Dorsolateral prefrontal cortex (tissue), 120 donors: ENCODE measurements at regions of chr3 and their contacts with region 1.

Region 1: DNA sequence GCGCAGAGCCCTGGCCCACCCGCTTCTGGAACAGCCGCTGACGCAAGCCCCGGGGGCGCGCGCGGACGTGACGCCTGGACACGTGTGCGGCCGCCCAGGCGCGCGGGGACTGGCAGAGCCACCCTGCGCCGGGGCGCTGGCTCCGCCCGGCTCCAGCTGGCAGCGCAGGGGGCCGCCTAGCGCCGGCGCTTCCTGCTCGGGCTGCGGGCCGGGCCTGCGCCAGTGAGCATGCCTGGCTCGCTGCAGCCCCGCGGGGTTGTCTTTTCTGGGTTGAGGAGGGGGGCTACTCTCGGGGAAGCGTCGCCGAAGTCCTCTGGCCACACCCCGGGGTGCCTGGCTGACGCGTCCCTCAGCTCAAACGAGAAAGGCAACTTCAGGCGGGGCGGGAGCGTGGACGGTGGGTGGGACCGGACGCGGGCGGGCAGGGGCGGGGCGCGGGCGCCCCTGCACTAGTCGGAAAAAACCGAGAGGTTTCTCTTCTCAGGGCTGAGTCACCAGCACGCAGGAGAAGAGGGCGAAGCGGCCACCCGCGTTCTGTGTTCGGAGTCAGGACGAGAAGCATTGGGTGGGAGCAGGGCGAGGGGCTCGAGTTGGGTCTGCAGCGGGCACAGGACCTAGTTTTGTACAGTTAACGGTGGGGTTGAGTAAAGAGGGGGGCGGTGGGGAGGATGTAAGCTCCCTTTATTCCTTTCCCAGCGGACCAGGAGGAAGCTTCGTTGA is at the start of gene SIAH2:
- DNase-seq: peak; percentile 84 to 95 (median 90)
- H3K4me3 ChIP-seq: peak within 1 kb of the TSS; percentile 46 to 97 (median 85)
- H3K27ac ChIP-seq: peak within 1 kb of the TSS; percentile 92 to 100 (median 99)
- H3K27me3 ChIP-seq: no peaks in the 10 kb centered on the region
- CTCF ChIP-seq: peak in 10 of 56 donors; percentile 2 to 54 (median 16)
- total RNA-seq, gene SIAH2: 12.6 to 40.1 (median 22.1) TPM

Region 2: DNA sequence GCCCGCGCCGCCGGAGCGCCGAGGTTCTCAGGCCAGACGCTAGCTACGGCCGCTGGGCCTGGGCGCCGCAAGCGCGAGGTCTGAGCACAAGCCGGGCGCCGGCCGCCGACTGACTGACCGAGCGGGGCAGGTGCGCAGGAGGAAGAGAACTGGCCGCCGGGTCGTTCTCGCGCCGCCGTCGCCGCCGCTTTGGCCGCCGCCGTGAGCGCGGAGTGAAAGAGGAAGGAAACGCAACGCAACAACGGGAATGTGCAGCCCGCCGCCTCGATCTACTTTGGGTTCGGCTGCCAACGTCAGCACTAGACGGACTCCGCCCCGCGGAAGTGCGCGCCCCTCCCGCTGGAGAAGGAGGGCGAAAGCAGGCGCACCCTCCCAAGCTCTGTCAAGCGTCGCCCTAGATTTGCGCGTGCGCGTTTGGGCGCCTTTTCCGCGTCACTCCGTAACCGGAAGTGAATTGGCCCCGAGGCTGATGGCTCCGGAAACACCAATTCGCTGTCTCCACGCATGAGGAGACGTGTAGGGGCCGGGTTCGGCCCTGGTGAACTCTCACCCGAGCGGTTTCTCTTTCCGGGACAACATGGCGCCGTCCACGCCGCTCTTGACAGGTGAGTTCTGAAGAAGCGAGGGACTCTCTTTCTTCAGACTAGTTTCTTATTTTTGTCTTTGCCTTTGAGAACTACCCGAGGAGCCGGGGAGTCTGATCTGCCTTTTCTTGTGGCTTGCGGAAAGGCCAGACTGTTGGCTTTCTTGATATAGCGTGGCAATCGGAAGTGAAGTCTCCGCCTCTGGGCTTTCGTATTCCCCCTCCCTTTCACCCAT is 216.8 kb before region 1 on chr3 and contains the starts of genes EIF2A and SERP1:
- intact Hi-C with region 1: loop called (anchors 1 to 2 kb)
- DNase-seq: peak; percentile 97 to 99 (median 98)
- H3K4me3 ChIP-seq: peak within 1 kb of the TSS; percentile 66 to 99 (median 93)
- H3K27ac ChIP-seq: peak within 1 kb of the TSS; percentile 72 to 99 (median 97)
- H3K27me3 ChIP-seq: no peaks in the 10 kb centered on the region
- CTCF ChIP-seq: peak in 32 of 56 donors; percentile 2 to 49 (median 24)
- total RNA-seq, gene EIF2A: 32.6 to 75.9 (median 53.3) TPM
- total RNA-seq, gene SERP1: 44.6 to 110 (median 64.5) TPM

Region 3: GRCh38 chr3:150603153-150603979 is 159.9 kb before region 1 on chr3 and contains the start of gene SELENOT:
- intact Hi-C with region 1: loop called (anchors 2 to 5 kb)
- DNase-seq: peak; percentile 83 to 96 (median 90)
- H3K4me3 ChIP-seq: peak within 1 kb of the TSS; percentile 61 to 98 (median 84)
- H3K27ac ChIP-seq: peak within 1 kb of the TSS; percentile 82 to 99 (median 96)
- H3K27me3 ChIP-seq: no peaks in the 10 kb centered on the region
- CTCF ChIP-seq: peak in 39 of 56 donors; percentile 2 to 65 (median 35)
- total RNA-seq, gene SELENOT: 78.5 to 150 (median 109) TPM

Region 4: GRCh38 chr3:150703299-150704134 is 59.8 kb before region 1 on chr3 and contains the start of gene ERICH6:
- intact Hi-C with region 1: loop called in 1 of 2 experiments (anchors 1 kb)
- DNase-seq: peak; percentile 67 to 92 (median 88)
- H3K4me3 ChIP-seq: peak within 1 kb of the TSS; percentile 44 to 87 (median 73)
- H3K27ac ChIP-seq: peak within 1 kb of the TSS in 51 of 59 donors; percentile 17 to 89 (median 72)
- H3K27me3 ChIP-seq: no peaks in the 10 kb centered on the region
- CTCF ChIP-seq: peak in 17 of 56 donors; percentile 12 to 39 (median 21)
- total RNA-seq, gene ERICH6: 0.23 to 2.5 (median 0.63) TPM in 81 of 120 experiments, not detected in the others

Region 5: DNA sequence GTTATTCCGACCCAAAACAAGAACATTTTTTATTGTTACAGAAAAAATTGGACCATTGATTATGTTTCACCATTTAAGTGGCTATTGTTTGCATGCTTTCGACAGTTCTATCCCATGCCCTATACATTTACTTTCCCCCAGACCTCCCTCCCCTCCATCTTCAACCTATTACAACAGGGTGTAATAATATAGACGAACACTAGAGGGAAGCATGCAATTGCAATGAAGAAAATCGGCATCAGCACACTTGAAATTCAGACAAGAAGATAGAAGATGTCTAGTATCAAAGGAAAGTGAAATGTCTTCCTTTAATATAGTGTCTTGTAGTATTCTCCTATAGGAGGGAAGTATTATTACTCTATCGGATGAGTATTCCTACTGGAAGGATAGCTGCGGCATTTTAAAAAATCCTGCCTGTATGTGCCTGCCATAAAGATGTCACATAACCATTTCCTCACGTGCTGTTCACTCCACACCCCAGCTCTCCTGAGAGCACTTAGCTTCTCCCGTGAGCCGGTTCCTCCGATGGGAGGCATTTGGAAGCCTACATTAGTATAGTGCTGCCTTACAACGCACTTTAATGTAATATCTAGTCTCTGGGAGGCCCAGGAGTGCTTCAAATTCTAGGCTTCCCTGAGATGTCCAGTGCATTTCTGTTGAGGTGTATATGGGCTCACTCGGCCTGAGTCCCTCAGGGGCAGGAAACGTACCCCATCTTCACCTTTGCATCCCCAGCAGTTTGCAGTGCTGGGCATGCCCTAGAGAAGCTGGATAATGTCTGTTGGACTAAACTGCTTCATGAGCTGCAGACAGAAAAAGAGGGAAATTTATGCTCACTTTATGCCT is 41.8 kb before region 1 on chr3:
- intact Hi-C with region 1: loop called in 1 of 2 experiments (anchors 5 kb)
- DNase-seq: peak in 1 of 10 donors; percentile 23
- H3K4me3 ChIP-seq: peak overlapping the region in 45 of 59 donors; percentile 5 to 51 (median 35)
- H3K27ac ChIP-seq: peak overlapping the region in 13 of 59 donors; percentile 2 to 48 (median 35)
- H3K27me3 ChIP-seq: no peaks in the 10 kb centered on the region
- CTCF ChIP-seq: peak; percentile 73 to 97 (median 88)

Region 6: GRCh38 chr3:151086484-151087456 is 323.5 kb after region 1 on chr3:
- intact Hi-C with region 1: loop called (anchors 2 to 10 kb)
- DNase-seq: peak; percentile 38 to 86 (median 76)
- H3K4me3 ChIP-seq: peak overlapping the region; percentile 58 to 86 (median 77)
- H3K27ac ChIP-seq: peak overlapping the region in 57 of 59 donors; percentile 23 to 91 (median 81)
- H3K27me3 ChIP-seq: no peaks in the 10 kb centered on the region
- CTCF ChIP-seq: peak in 47 of 56 donors; percentile 16 to 64 (median 44)